Gastrocnemius medialis (tissue), 4 donors: ENCODE measurements at regions of chr16 and their contacts with region 1.

Region 1: DNA sequence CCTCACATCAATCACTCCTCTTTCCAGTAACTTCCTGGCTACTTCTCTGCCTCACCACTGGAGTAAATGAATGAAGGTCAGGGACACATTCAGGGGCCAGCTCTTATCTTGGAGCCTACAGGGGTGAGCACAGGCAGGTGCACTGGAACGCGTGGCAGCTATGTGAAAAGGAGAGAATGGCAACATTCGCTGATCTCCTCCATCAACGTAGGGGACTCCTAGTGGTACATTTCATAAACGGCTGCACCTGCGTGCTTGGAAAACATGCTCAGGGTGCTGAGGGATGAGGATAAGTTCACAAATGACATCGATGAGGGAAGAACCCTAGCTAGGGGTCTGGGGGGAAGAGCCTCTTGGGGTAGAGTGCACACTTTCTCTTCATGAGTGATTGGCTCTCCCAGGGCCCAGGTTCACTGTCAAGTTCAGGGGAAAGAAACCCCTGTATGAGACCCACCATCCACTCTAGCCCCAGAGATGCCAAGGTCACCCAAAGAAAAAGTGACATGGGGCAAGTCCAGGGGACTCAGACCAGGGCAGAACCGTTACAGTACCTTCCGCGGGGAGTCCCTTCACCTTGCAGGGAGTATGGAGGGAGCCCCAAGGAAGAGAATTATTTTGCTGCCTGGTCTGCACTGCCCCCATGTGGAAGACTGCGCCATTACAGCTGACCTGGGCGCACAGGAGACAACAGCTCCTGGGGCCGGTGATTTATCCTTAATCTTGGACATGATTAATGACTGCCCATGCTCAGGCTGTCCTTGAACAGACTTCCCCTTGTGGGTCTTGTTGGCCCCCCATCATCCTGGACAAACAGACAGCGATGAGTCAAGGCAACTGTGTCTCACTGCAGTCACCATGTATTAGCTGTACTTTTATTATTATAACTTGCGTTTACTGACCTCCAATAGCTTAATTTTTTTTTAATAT is 30.1 kb downstream of the VAC14 start:
- DNase-seq: peak; percentile 44 to 75
- ATAC-seq: peak; percentile 72 to 79
- H3K4me3 ChIP-seq: no peak overlapping the region
- H3K27ac ChIP-seq: peak overlapping the region; percentile 27 to 66 (median 64)
- H3K4me1 ChIP-seq: peaks cover 45 to 49% of the 10 kb centered on the region in 2 donors
- H3K27me3 ChIP-seq: no peaks in the 10 kb centered on the region
- CTCF ChIP-seq: peak; percentile 95 to 97 (median 96)
- POLR2A ChIP-seq: no peak

Region 2: DNA sequence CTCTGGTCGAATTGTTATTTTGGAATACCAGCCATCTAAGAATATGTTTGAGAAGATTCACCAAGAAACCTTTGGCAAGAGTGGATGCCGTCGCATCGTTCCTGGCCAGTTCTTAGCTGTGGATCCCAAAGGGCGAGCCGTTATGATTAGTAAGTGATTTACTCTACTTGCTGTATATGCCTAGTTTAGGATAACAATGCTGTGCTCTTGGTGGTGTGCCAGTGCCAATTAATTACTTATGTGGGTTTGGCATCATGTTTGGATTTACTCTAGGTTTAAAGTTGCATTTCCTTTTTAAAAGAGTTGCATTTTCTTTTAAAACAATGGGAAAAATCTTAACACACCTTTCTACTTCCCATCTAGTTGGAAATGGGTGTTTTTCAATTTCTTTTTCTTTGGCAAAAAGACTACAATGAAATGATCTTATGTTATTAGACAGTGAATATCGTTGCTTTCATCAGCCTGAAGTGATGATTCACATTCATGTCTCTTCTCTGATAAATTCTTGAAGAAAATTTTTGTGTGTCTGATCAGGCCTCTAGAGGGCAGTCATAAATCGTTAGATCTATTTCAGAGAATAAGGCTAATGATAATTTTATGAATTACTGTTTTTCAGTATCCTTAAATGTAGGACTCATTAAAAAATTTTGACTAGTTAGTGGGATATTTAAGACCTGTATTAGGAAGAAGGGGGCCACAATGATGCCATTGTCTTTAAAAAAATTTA is 241.7 kb before region 1 on chr16:
- in situ Hi-C with region 1: loop called (anchors 25 kb)
- intact Hi-C with region 1: loop called (anchors 2 kb)
- DNase-seq: no peak
- ATAC-seq: peak in 1 of 2 donors; percentile 17
- H3K4me3 ChIP-seq: no peak overlapping the region
- H3K27ac ChIP-seq: peak overlapping the region; percentile 19 to 70 (median 48)
- H3K4me1 ChIP-seq: peaks cover 36 to 41% of the 10 kb centered on the region in 2 donors
- H3K27me3 ChIP-seq: no peaks in the 10 kb centered on the region
- CTCF ChIP-seq: peak; percentile 37 to 61 (median 54)
- POLR2A ChIP-seq: no peak

Region 3: GRCh38 chr16:70674221-70675014 is 96.5 kb before region 1 on chr16:
- in situ Hi-C with region 1: loop called in 2 of 4 experiments (anchors 5 to 10 kb)
- intact Hi-C with region 1: no loop called
- DNase-seq: no peak
- ATAC-seq: no peak
- H3K4me3 ChIP-seq: no peak overlapping the region
- H3K27ac ChIP-seq: no peak overlapping the region
- H3K4me1 ChIP-seq: peaks cover 4 to 5% of the 10 kb centered on the region in 2 donors
- H3K27me3 ChIP-seq: no peaks in the 10 kb centered on the region
- CTCF ChIP-seq: no peak
- POLR2A ChIP-seq: no peak

Region 4: DNA sequence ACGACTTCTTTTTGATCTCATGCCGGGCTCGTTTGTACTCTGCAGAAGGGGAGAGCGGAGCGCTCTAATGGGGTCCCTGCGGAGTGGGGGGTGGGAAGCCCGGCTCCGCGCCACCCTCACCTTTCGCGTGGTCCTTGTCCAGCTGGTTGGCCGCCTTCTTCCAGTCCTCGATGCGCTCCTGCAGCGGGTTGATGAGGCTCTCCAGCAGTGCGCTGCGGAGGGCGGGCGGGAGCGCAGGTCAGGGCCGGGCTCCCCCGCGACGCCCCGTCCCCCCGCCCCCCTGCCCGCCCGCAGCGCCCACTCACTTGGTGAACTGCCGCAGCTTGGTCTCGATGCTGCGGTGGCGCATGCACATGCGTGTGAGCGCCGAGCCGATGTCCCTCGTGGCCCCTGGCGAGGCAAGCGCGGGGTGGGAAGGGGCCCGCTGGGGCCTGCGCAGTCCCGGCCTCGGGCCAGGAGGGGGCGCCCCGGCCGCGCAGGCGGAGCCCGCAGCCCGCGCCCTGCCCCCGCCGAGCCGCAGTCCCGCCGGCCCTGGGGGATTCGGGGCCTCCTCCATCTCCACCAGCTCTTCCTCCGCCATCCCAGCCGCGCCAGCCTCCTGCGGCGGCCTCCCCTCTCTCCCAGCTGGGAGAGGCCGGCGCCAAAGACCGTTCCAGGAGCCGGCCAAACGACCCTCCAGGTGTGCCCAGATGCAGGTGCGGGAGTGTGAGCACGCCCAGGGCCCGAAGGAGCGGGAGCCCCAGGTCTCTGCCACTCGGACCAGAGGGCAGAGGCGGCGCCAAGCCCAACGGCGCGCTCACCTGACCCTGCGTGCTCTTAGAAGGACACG is 91.0 kb before region 1 on chr16:
- in situ Hi-C with region 1: loop called in 3 of 4 experiments (anchors 5 to 10 kb)
- intact Hi-C with region 1: loop called (anchors 1 kb)
- DNase-seq: no peak
- ATAC-seq: peak in 1 of 2 donors; percentile 27
- H3K4me3 ChIP-seq: no peak overlapping the region
- H3K27ac ChIP-seq: peak overlapping the region; percentile 40 to 63 (median 48)
- H3K4me1 ChIP-seq: peaks cover 30 to 45% of the 10 kb centered on the region in 2 donors
- H3K27me3 ChIP-seq: no peaks in the 10 kb centered on the region
- CTCF ChIP-seq: peak in 4 of 5 experiments; percentile 72 to 88 (median 84)
- POLR2A ChIP-seq: no peak

Region 5: DNA sequence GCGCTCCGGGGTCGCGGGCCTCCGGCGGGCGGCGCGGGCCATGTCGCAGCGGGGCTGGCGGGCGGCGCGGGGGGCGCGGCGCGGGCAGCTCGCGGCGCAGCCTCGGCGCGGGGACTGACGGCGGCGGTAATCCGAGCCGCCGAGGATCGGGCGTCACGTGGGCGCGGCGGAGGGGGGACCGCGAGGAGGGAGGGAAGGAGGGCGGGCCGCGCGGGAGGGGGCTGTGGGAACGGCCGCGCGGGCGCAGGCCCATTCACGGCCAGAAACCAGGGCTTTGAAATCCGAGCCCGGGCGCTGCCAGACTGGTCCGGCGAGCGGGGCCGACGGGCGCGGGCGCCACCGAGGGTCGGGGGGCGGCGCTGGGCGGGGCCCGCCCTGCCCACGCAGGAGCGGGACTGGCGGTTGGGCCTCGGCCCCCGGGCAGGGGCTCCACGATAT is 84.9 kb before region 1 on chr16 and contains the start of gene MTSS2:
- in situ Hi-C with region 1: loop called in 2 of 4 experiments (anchors 5 to 10 kb)
- intact Hi-C with region 1: no loop called
- DNase-seq: peak; percentile 80 to 88
- ATAC-seq: peak; percentile 51 to 63
- H3K4me3 ChIP-seq: peak within 1 kb of the TSS; percentile 70 to 80 (median 72)
- H3K27ac ChIP-seq: peak within 1 kb of the TSS; percentile 88 to 97 (median 94)
- H3K4me1 ChIP-seq: peaks cover 73 to 90% of the 10 kb centered on the region in 2 donors
- H3K27me3 ChIP-seq: no peaks in the 10 kb centered on the region
- CTCF ChIP-seq: peak in 3 of 5 experiments; percentile 3 to 38 (median 29)
- POLR2A ChIP-seq: peak; percentile 83 to 89
- total RNA-seq, gene MTSS2: 42.6 to 160 (median 93.9) TPM

Region 6: DNA sequence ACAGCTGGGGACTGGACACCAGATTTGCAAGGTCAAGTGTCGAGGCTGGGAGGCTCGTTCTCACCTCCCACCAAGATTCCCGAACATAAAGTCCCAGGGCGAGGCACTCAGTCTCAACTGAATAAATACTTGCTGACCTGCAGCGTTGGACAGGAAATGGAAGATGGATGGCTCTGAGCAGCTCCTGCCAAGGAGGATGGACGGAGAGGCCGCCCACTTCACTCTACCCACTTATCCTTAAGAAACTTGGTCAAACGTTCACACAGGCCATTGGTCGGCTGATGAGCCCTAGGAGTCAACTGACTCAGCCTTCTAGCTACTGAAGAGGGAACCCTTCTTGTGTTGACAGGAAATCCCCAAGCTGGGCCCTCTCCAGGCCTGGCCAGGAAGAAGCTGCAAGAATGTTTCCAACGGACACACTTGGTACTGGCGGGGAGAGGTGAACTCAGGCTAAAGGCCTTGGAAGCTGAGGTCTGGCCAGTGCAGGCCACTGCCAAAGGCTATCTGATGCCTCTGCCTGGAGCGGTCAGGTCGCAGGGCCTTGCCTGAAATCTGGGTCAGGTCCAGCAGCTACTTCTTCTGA is 19.9 kb before region 1 on chr16:
- in situ Hi-C with region 1: no loop called
- intact Hi-C with region 1: loop called (anchors 2 kb)
- DNase-seq: peak; percentile 94 to 99
- ATAC-seq: peak; percentile 84 to 92
- H3K4me3 ChIP-seq: peak overlapping the region in 2 of 4 donors; percentile 8 to 19
- H3K27ac ChIP-seq: peak overlapping the region; percentile 81 to 88 (median 83)
- H3K4me1 ChIP-seq: peaks cover 70 to 79% of the 10 kb centered on the region in 2 donors
- H3K27me3 ChIP-seq: no peaks in the 10 kb centered on the region
- CTCF ChIP-seq: peak in 1 of 5 experiments; percentile 15
- POLR2A ChIP-seq: no peak